Activated CD4-positive, alpha-beta memory T cell treated with anti-CD3 and anti-CD28 coated beads, Interleukin-2, amount 10 ng/mL, durations not matched to agents 7 days and 5 days (primary cell): ENCODE measurements at regions of chr10 and their contacts with region 1.

Region 1: DNA sequence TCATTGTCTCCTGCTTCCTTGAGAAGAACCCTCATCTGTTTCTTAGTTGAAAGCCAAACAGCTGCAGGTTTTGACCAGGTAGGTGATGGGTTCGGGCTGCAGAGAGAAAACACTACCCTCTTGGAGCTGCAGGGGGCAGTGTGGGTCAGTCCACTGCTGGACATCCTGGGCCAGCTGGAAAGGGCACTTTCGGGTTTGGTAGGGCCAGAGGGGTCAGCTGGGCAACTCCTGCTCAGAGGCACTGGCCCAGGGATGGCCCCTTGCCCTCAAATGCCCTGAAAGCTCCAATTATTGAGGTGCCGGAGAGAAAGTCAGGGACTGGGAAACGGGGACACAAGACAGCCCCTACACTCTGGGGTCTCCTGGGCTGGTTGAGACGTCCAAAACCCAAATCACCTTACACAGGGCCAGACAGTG is 90.7 kb downstream of the MKI67 start:
- DNase-seq: peak; percentile 71
- H3K4me3 Mint-ChIP-seq: no peak overlapping the region
- H3K27ac Mint-ChIP-seq: no peak overlapping the region
- H3K4me1 Mint-ChIP-seq: peaks cover 3% of the 10 kb centered on the region
- H3K27me3 Mint-ChIP-seq: peaks cover 2% of the 10 kb centered on the region

Region 2: DNA sequence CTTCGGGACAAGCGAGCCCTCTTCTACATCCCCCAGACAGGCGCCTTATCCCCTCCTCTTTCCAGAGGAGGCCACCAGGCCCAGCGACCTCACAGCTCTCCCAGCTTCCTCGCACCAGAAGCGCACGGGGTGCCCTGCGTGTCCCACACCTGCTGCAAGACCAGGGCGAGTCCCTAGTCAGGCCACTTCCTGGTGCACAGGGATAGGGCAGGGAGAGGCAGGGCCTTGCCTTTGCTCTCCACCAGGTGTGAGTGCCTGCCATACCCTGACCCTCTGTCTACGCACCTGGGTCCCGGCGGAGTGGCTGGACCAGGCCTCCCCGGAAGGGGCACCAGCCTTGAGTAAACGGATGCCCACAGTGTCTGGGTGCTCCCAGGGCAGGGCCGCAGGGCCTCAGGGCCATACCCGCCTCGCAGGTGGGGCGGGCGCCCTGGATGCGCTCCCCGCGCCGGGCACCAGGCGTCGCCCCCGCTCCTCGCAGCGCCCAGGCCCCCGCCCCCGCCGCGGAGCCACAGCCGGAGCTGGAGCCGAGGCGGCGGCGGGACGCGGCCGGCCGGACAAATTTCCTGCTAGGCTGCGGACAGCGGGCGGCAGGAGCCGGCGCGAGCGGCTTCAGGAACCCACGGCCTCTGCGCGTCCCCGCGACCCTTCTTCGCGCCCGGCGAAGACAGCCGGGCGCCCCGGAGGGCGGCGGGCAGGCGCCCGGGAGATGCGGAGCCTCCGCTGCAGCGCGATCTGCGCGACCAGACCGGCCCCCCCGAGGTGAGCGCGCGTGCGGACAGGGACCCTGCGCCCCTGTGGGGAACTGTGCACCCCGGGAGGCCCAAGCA is 128.8 kb before region 1 on chr10 and contains the start of gene PTPRE:
- CTCF ChIA-PET with region 1: interaction called, 14 read pairs
- POLR2A ChIA-PET with region 1: no interaction called
- DNase-seq: peak; percentile 71
- H3K4me3 Mint-ChIP-seq: peak within 1 kb of the TSS; percentile 14
- H3K27ac Mint-ChIP-seq: no peak within 1 kb of the TSS
- H3K4me1 Mint-ChIP-seq: peaks cover 9% of the 10 kb centered on the region
- H3K27me3 Mint-ChIP-seq: peaks cover 41% of the 10 kb centered on the region
- total RNA-seq, gene PTPRE: 29.2 to 30.6 TPM

Region 3: GRCh38 chr10:128064108-128064969 is 28.8 kb after region 1 on chr10:
- CTCF ChIA-PET with region 1: interaction called, 216 read pairs
- POLR2A ChIA-PET with region 1: interaction called, 13 read pairs
- DNase-seq: peak; percentile 76
- H3K4me3 Mint-ChIP-seq: peak overlapping the region; percentile 51
- H3K27ac Mint-ChIP-seq: peak overlapping the region; percentile 76
- H3K4me1 Mint-ChIP-seq: peaks cover 66% of the 10 kb centered on the region
- H3K27me3 Mint-ChIP-seq: no peaks in the 10 kb centered on the region

Region 4: GRCh38 chr10:128078136-128078969 is 42.8 kb after region 1 on chr10:
- CTCF ChIA-PET with region 1: interaction called, 216 read pairs
- POLR2A ChIA-PET with region 1: interaction called, 3 read pairs
- DNase-seq: peak; percentile 42
- H3K4me3 Mint-ChIP-seq: no peak overlapping the region
- H3K27ac Mint-ChIP-seq: no peak overlapping the region
- H3K4me1 Mint-ChIP-seq: peaks cover 17% of the 10 kb centered on the region
- H3K27me3 Mint-ChIP-seq: no peaks in the 10 kb centered on the region